Activated B cell treated with CpG ODN at 0.5 μM for 24 hours (primary cell): ENCODE measurements at regions of chr1 and their contacts with region 1.

Region 1: GRCh38 chr1:192559115-192560006 is 16.2 kb upstream of the RGS1 start:
- DNase-seq: no peak
- ATAC-seq: no peak
- H3K4me3 Mint-ChIP-seq: no peak overlapping the region
- H3K27ac Mint-ChIP-seq: peak overlapping the region; percentile 33
- H3K4me1 Mint-ChIP-seq: peaks cover 23% of the 10 kb centered on the region
- H3K27me3 Mint-ChIP-seq: no peaks in the 10 kb centered on the region
- CTCF ChIP-seq: no peak

Region 2: DNA sequence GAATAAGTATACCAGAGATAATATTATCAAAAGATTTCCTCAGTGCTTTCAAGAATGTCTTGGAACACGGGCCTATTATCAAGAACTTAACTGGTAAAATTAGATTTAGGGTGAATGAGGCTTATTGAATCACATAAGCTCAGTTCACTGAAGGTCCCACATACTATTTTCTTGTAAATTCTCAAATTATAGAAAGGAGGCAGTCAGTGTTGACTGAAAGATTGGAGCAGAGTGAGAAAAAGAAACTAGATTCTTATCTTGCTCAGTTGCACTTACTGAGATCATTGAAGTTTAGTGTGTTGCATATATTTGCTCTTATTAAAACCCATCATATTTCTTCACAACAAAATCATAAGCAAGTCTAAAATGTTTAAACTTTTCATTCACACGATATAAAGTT is 12.3 kb after region 1 on chr1:
- CTCF ChIA-PET with region 1: no interaction called
- POLR2A ChIA-PET with region 1: interaction called, 4 read pairs
- intact Hi-C with region 1: loop called (anchors 1 kb)
- DNase-seq: no peak
- ATAC-seq: no peak
- H3K4me3 Mint-ChIP-seq: no peak overlapping the region
- H3K27ac Mint-ChIP-seq: no peak overlapping the region
- H3K4me1 Mint-ChIP-seq: peaks cover 31% of the 10 kb centered on the region
- H3K27me3 Mint-ChIP-seq: no peaks in the 10 kb centered on the region
- CTCF ChIP-seq: no peak